HepG2 (cell line): ENCODE measurements at regions of chr13 and their contacts with region 1.

Region 1: GRCh38 chr13:33262062-33262497 is 23.5 kb downstream of the STARD13 start:
- DNase-seq: peak; percentile 88
- ATAC-seq: peak; percentile 86
- H3K4me3 ChIP-seq: peak overlapping the region in 2 of 3 experiments; percentile 8 to 34; a peak in 2 of 6 replicates
- H3K27ac ChIP-seq: peak overlapping the region; percentile 94
- H3K4me1 ChIP-seq: peaks cover 92% of the 10 kb centered on the region
- H3K27me3 ChIP-seq: no peaks in the 10 kb centered on the region
- CTCF ChIP-seq: peak; percentile 54
- EP300 ChIP-seq: no peak
- POLR2A ChIP-seq: peak; percentile 25 to 35; a peak in 1 of 4 replicates
- RAD21 ChIP-seq: no peak

Region 2: DNA sequence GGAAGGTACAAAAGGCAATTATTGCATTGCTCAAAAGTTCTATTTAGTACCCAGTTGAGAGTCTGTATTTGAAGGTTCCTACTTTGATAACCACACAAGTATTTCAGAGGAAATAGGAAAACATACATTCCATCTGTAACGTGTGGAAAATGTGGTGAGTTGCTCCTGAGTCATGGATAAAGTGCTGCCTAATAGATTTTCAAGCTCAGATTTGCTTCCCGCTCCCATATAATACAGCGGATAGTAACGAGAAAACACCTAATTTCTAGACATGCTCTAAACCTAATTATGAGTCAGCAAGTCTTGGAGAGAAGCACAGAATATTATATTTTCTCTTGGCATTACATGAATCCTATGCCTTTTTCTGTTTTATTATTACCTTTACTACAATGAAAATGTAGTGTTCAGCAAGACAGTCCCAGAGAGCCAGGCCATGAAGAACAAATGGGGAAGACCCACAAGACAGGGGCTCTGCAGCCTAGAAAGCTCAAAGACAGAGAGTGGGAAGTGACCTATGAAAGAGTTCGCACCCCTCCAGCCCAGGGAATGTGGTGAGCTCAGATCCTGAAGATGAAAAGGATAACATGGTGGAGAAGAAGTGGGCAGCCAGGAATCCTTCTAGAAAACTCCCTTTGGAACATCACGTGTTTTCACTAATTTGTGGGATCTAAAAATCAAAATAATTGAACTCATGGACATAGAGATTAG is 92.7 kb before region 1 on chr13:
- CTCF ChIA-PET with region 1: no interaction called
- POLR2A ChIA-PET with region 1: interaction called, 10 read pairs
- in situ Hi-C with region 1: no loop called
- intact Hi-C with region 1: no loop called
- DNase-seq: no peak
- ATAC-seq: no peak; the same call in 2 of the 3 replicates
- H3K4me3 ChIP-seq: peak overlapping the region in 1 of 3 experiments; percentile 30; a peak in 1 of 6 replicates
- H3K27ac ChIP-seq: peak overlapping the region; percentile 85
- H3K4me1 ChIP-seq: peaks cover 65% of the 10 kb centered on the region
- H3K27me3 ChIP-seq: no peaks in the 10 kb centered on the region
- CTCF ChIP-seq: no peak
- EP300 ChIP-seq: no peak
- POLR2A ChIP-seq: no peak
- RAD21 ChIP-seq: no peak

Region 3: GRCh38 chr13:33276570-33276969 is 14.5 kb after region 1 on chr13:
- CTCF ChIA-PET with region 1: no interaction called
- POLR2A ChIA-PET with region 1: interaction called, 12 read pairs
- in situ Hi-C with region 1: no loop called
- intact Hi-C with region 1: no loop called
- DNase-seq: no peak
- ATAC-seq: no peak
- H3K4me3 ChIP-seq: no peak overlapping the region
- H3K27ac ChIP-seq: no peak overlapping the region
- H3K4me1 ChIP-seq: peaks cover 72% of the 10 kb centered on the region
- H3K27me3 ChIP-seq: no peaks in the 10 kb centered on the region
- CTCF ChIP-seq: no peak
- EP300 ChIP-seq: no peak
- POLR2A ChIP-seq: no peak
- RAD21 ChIP-seq: no peak

Region 4: DNA sequence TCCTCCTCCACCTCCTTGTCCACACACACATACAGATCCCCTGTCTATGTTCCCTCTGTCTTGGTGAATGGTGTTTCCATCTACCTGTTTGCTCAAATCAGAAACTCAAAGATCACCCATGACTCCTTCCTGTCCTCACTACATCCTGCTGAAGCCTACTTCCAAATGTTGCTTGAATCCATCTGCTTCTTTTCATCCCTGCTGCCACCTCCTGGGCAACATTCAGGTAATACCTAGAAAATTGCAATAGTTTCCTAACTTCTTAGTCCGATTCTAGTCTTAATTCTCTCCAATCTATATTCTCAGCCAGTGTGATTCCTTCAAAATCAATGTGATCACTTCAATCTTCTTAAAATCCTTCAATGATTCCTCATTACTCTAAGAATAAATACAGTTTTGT is 178.9 kb after region 1 on chr13:
- CTCF ChIA-PET with region 1: no interaction called
- POLR2A ChIA-PET with region 1: no interaction called
- in situ Hi-C with region 1: no loop called
- intact Hi-C with region 1: loop called (anchors 10 kb)
- DNase-seq: peak; percentile 35
- ATAC-seq: peak; percentile 74
- H3K4me3 ChIP-seq: no peak overlapping the region
- H3K27ac ChIP-seq: no peak overlapping the region
- H3K4me1 ChIP-seq: peaks cover 19% of the 10 kb centered on the region
- H3K27me3 ChIP-seq: no peaks in the 10 kb centered on the region
- CTCF ChIP-seq: peak; percentile 62
- EP300 ChIP-seq: no peak
- POLR2A ChIP-seq: no peak
- RAD21 ChIP-seq: no peak